ENCODE measurements at regions of chr10 and their contacts with region 1.

Region 1: GRCh38 chr10:14560274-14560673 is 214.4 kb downstream of the FAM107B start:
- DNase-seq: peak; percentile 94
- H3K4me3 Mint-ChIP-seq: peak overlapping the region; percentile 13
- H3K27ac Mint-ChIP-seq: peak overlapping the region; percentile 88
- H3K4me1 Mint-ChIP-seq: peaks cover 91% of the 10 kb centered on the region
- H3K27me3 Mint-ChIP-seq: no peaks in the 10 kb centered on the region

Region 2: GRCh38 chr10:14009371-14010100 is 550.7 kb before region 1 on chr10:
- CTCF ChIA-PET with region 1: no interaction called
- intact Hi-C with region 1: loop called (anchors 10 kb)
- DNase-seq: peak; percentile 84
- H3K4me3 Mint-ChIP-seq: peak overlapping the region; percentile 79
- H3K27ac Mint-ChIP-seq: peak overlapping the region; percentile 90
- H3K4me1 Mint-ChIP-seq: peaks cover 35% of the 10 kb centered on the region
- H3K27me3 Mint-ChIP-seq: no peaks in the 10 kb centered on the region

Region 3: DNA sequence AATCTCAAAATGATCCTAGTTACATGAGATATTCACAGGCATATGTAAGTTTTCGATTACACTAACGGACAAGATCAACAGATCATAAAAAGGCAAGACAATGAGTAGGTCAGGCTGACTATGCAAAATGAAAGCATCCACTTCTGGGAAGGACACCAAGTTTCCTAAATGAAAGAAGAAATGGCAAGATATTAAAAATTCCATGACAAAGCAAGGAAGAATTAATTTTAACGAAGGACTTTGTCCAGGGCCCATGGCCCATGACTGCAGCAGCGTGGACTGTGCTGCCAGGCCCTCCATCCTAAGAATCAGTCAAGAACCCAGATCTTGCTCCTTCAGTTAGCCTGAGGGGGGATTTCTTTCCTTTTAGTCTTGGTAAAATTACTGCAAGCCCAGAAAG is 47.2 kb before region 1 on chr10:
- CTCF ChIA-PET with region 1: no interaction called
- intact Hi-C with region 1: no loop called
- DNase-seq: no peak
- H3K4me3 Mint-ChIP-seq: no peak overlapping the region
- H3K27ac Mint-ChIP-seq: no peak overlapping the region
- H3K4me1 Mint-ChIP-seq: peaks cover 15% of the 10 kb centered on the region
- H3K27me3 Mint-ChIP-seq: no peaks in the 10 kb centered on the region

Region 4: DNA sequence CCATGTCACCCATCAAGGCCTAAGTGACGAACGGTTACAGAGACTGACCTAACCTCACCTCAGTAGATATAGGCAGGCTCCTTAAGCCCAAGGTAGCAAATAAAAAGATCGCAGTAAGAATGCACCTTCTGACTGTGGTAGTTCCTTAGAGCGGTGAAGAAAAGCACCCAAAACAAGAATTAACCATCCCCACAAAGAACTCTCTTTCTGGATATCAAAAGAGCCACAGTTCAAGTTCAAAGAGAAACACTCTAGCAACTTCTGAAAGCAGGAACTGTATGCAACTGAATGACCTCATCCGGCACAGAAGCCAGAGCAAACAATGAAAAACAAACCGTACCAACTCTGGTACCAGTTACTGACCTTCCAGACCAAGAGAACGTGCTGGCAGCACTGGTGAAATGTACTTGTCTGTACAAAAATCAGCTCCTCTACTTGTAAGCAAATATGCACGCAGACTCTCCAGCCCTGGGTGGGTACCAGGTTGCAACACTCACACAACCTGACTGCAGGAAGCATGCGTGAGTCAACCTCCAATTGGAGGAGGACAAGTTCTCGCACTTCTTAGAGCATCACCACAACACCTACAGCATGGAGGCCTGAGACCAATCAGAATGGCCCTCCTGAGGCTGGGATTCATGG is 11.7 kb after region 1 on chr10:
- CTCF ChIA-PET with region 1: interaction called, 3 read pairs
- intact Hi-C with region 1: loop called (anchors 1 kb)
- DNase-seq: peak; percentile 78
- H3K4me3 Mint-ChIP-seq: peak overlapping the region; percentile 69
- H3K27ac Mint-ChIP-seq: peak overlapping the region; percentile 97
- H3K4me1 Mint-ChIP-seq: peaks cover 81% of the 10 kb centered on the region
- H3K27me3 Mint-ChIP-seq: no peaks in the 10 kb centered on the region

Region 5: DNA sequence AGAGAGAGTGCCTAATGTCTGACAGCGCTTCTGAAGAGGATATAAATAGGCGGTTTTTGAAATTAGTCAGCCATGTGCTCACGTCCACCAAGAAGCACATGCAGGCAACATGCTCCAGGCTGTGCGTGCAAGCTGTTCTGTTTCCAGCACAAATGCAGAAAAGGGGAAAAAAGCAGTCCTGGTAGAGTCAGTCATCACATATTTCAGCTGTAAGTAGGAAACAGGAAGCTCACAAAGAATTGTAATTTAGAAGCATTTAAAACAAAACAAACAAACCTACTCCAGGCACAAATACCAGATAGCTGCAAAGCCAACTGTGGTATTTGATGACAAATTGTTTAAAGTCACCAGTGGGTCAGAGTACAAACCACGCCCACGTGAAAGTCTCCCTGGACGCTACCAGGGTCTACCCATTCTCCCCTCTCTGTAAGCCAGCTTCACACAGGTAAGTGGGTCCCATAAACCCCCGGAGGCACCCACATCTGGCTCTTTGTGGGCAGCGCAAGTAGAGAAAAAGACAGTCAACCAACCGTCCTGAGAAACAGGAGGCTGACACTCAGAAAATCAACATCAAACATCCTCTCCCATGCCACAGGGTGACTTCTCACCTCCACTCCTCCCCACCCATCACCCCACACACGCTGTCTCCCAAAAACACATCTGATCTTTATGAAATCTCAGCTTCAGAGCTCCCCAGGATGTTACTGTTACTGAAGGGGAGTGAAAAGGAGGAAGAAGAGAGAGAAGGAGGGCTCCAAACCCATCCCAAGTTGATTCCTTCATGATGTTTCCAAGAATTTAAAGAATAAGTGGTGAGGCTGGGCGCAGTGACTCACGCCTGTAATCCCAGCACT is 28.0 kb after region 1 on chr10:
- CTCF ChIA-PET with region 1: interaction called, 7 read pairs
- intact Hi-C with region 1: loop called (anchors 1 kb)
- DNase-seq: peak; percentile 83
- H3K4me3 Mint-ChIP-seq: peak overlapping the region; percentile 63
- H3K27ac Mint-ChIP-seq: peak overlapping the region; percentile 97
- H3K4me1 Mint-ChIP-seq: peaks cover 90% of the 10 kb centered on the region
- H3K27me3 Mint-ChIP-seq: no peaks in the 10 kb centered on the region

Region 6: GRCh38 chr10:14822879-14823755 is 262.8 kb after region 1 on chr10:
- CTCF ChIA-PET with region 1: no interaction called
- intact Hi-C with region 1: loop called (anchors 1 kb)
- DNase-seq: peak; percentile 64
- H3K4me3 Mint-ChIP-seq: no peak overlapping the region
- H3K27ac Mint-ChIP-seq: no peak overlapping the region
- H3K4me1 Mint-ChIP-seq: peaks cover 3% of the 10 kb centered on the region
- H3K27me3 Mint-ChIP-seq: no peaks in the 10 kb centered on the region

Region 7: GRCh38 chr10:14878266-14879054 is 318.2 kb after region 1 on chr10 and contains the start of gene SUV39H2:
- CTCF ChIA-PET with region 1: no interaction called
- intact Hi-C with region 1: loop called (anchors 2 kb)
- DNase-seq: peak; percentile 94
- H3K4me3 Mint-ChIP-seq: peak within 1 kb of the TSS; percentile 94
- H3K27ac Mint-ChIP-seq: peak within 1 kb of the TSS; percentile 81
- H3K4me1 Mint-ChIP-seq: peaks cover 28% of the 10 kb centered on the region
- H3K27me3 Mint-ChIP-seq: no peaks in the 10 kb centered on the region
- total RNA-seq, gene SUV39H2: 35.8 to 38.2 TPM

Region 8: GRCh38 chr10:14889318-14889717 is 329.0 kb after region 1 on chr10:
- CTCF ChIA-PET with region 1: no interaction called
- intact Hi-C with region 1: no loop called
- DNase-seq: no peak
- H3K4me3 Mint-ChIP-seq: no peak overlapping the region
- H3K27ac Mint-ChIP-seq: no peak overlapping the region
- H3K4me1 Mint-ChIP-seq: peaks cover 9% of the 10 kb centered on the region
- H3K27me3 Mint-ChIP-seq: no peaks in the 10 kb centered on the region